ENCODE measurements at regions of chr12 and their contacts with region 1.

Region 1: DNA sequence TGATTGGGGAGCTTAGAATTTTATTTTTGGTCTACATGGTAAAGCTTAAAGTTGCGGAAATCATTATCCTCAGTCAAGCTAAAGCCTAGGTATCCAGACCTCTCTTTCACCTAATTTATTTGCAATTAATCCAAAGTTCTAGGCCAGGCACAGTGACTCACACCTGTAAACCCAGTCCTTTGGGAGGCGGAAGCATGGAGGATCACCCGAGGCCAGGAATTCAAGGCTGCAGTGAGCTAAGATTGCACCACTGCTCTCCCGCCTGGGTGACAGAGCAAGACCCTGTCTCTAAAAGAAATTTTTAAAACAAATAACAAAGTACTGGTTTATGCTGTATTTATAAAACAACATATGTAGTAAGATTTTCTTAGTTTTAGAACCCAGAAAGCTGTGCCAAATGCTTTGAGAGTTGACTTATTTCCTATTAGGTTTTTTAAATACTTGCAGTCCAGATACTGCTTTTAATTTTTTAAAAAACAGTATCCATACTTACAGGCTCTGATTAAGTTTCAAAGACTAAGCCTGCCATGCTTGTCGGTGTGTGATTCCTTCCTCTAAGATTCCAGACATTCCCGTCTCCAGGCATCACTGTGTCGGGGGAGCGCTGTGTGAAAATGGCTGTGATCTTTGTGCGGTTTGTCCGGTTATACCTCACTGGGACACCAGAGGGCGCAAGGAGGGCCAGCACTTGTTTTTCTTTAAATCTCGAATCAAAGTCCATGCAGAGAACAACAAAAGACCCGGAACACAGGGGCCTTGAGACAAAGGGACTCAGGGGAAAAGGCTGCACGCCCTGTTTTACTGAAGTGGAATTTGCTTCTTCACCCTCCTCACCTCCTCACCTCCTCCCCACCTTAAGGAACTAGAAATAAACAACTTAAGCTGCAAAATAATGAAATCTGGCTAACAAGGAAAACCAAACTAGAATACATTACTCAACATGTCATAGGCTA is 24.6 kb upstream of the TMPO start:
- DNase-seq: peak; percentile 45 to 73
- ATAC-seq: peak; percentile 90 to 92
- H3K4me3 ChIP-seq: peak overlapping the region in 1 of 4 donors; percentile 4
- H3K27ac ChIP-seq: peak overlapping the region in 2 of 4 donors; percentile 41 to 57
- H3K4me1 ChIP-seq: peaks cover 3% of the 10 kb centered on the region in 2 donors
- H3K27me3 ChIP-seq: no peaks in the 10 kb centered on the region
- CTCF ChIP-seq: peak; percentile 71 to 90 (median 85)
- POLR2A ChIP-seq: no peak

Region 2: GRCh38 chr12:98238515-98239130 is 252.2 kb before region 1 on chr12:
- in situ Hi-C with region 1: no loop called
- intact Hi-C with region 1: no loop called
- DNase-seq: no peak
- ATAC-seq: no peak
- H3K4me3 ChIP-seq: no peak overlapping the region
- H3K27ac ChIP-seq: no peak overlapping the region
- H3K4me1 ChIP-seq: no peaks in the 10 kb centered on the region
- H3K27me3 ChIP-seq: no peaks in the 10 kb centered on the region
- CTCF ChIP-seq: no peak
- POLR2A ChIP-seq: no peak

Region 3: GRCh38 chr12:98532681-98533304 is 42.0 kb after region 1 on chr12:
- in situ Hi-C with region 1: no loop called
- intact Hi-C with region 1: loop called (anchors 5 kb)
- DNase-seq: no peak
- ATAC-seq: peak; percentile 58 to 67
- H3K4me3 ChIP-seq: no peak overlapping the region
- H3K27ac ChIP-seq: peak overlapping the region; percentile 69 to 75 (median 70)
- H3K4me1 ChIP-seq: peaks cover 13 to 21% of the 10 kb centered on the region in 2 donors
- H3K27me3 ChIP-seq: no peaks in the 10 kb centered on the region
- CTCF ChIP-seq: peak; percentile 38 to 64 (median 55)
- POLR2A ChIP-seq: no peak